H1 (cell line): ENCODE measurements at regions of chr1 and their contacts with region 1.

Region 1: DNA sequence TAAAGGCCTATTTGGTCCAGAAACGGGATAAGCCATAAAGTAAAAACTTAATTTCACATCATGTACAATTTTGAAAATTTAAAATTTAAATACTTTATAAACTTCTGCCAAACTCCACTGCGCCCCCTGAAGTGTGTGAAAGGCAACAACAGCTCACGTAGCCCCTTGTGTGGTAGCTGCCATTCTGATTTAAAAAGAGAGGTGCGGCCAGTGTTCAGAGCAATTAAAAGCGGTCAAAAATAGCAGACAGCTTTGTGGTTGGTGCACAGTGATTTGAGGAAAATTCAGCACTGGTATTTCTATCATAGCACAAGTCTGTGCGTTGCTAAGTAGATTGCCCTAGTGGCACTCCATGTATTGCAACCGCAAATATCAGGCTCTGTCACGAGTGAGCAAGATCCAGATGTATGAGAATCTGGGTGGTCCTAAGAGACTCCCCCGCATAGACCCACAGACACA is 122.5 kb downstream of the ATG4C start:
- DNase-seq: peak in 1 of 2 experiments; percentile 54
- H3K4me3 ChIP-seq: no peak overlapping the region
- H3K27ac ChIP-seq: no peak overlapping the region
- H3K4me1 ChIP-seq: no peaks in the 10 kb centered on the region; a peak in 1 of 7 replicates
- H3K27me3 ChIP-seq: no peaks in the 10 kb centered on the region
- CTCF ChIP-seq: peak; percentile 54 to 67 (median 65)
- EP300 ChIP-seq: no peak
- POLR2A ChIP-seq: no peak
- RAD21 ChIP-seq: peak; percentile 16 to 35; a peak in 2 of 4 replicates

Region 2: DNA sequence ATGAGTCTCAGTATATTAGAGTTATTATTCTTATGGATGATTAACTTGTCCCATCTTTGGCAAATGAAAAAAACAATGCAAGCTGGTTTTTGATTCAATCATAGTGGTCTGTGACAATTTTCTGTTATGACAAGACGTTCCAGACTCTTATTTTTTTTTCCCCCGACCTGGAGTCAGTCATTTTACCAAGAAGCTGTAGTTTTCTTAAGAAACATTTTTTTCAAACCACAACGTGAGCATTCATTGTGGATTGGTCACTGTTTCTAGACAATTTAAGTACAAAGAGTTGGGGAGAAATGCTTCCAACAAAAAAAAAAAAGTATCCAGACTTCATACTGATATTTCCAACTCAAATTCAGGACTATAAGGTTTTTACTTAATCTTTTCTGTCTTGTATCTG is 317.1 kb before region 1 on chr1:
- CTCF ChIA-PET with region 1: no interaction called
- POLR2A ChIA-PET with region 1: no interaction called
- DNase-seq: no peak
- H3K4me3 ChIP-seq: no peak overlapping the region
- H3K27ac ChIP-seq: no peak overlapping the region
- H3K4me1 ChIP-seq: peaks cover 0 to 4% (median 0%) of the 10 kb centered on the region in 4 experiments; a peak in 2 of 7 replicates
- H3K27me3 ChIP-seq: no peaks in the 10 kb centered on the region
- CTCF ChIP-seq: no peak
- EP300 ChIP-seq: no peak
- POLR2A ChIP-seq: no peak
- RAD21 ChIP-seq: no peak

Region 3: GRCh38 chr1:62875676-62876075 is 30.8 kb before region 1 on chr1:
- CTCF ChIA-PET with region 1: interaction called, 31 read pairs
- POLR2A ChIA-PET with region 1: no interaction called
- DNase-seq: no peak
- H3K4me3 ChIP-seq: no peak overlapping the region
- H3K27ac ChIP-seq: no peak overlapping the region
- H3K4me1 ChIP-seq: no peaks in the 10 kb centered on the region
- H3K27me3 ChIP-seq: no peaks in the 10 kb centered on the region
- CTCF ChIP-seq: no peak
- EP300 ChIP-seq: no peak
- POLR2A ChIP-seq: no peak
- RAD21 ChIP-seq: no peak

Region 4: GRCh38 chr1:62891956-62892561 is 14.4 kb before region 1 on chr1:
- CTCF ChIA-PET with region 1: interaction called, 77 read pairs
- POLR2A ChIA-PET with region 1: no interaction called
- DNase-seq: no peak
- H3K4me3 ChIP-seq: no peak overlapping the region
- H3K27ac ChIP-seq: no peak overlapping the region
- H3K4me1 ChIP-seq: no peaks in the 10 kb centered on the region; a peak in 1 of 7 replicates
- H3K27me3 ChIP-seq: no peaks in the 10 kb centered on the region
- CTCF ChIP-seq: no peak
- EP300 ChIP-seq: no peak
- POLR2A ChIP-seq: no peak
- RAD21 ChIP-seq: no peak

Region 5: DNA sequence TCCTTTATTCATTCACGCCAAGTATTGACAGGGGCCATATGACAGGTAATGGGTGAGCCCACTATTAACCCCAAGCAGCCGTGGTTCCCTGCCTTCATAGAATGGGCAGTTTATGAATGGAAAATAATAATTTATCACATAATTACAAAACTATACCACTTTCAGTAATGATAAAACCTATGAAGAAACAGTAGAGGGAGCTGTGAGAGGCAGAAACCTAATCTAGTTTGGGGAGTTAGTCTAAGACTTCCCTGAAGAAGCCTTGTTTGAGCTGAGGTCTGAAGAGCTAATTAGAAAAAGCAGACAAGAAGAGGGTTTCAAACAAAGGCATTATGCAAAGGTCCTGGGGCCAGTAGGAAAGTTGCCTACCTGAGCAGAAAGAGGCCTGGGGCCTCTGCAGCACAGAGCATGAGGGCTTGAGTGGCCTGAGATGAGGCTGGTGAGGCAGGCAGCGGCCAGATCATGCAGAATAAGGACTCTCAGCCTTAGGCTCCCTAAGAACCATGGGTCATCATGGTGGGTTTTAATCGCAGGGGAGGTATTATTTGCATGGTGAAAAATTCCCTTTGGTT is 20.3 kb after region 1 on chr1:
- CTCF ChIA-PET with region 1: interaction called, 47 read pairs
- POLR2A ChIA-PET with region 1: no interaction called
- DNase-seq: no peak
- H3K4me3 ChIP-seq: no peak overlapping the region
- H3K27ac ChIP-seq: no peak overlapping the region
- H3K4me1 ChIP-seq: no peaks in the 10 kb centered on the region
- H3K27me3 ChIP-seq: no peaks in the 10 kb centered on the region; a peak in 1 of 7 replicates
- CTCF ChIP-seq: peak in 1 of 3 experiments; percentile 6; a peak in 1 of 4 replicates
- EP300 ChIP-seq: no peak
- POLR2A ChIP-seq: no peak
- RAD21 ChIP-seq: peak; percentile 10 to 23; a peak in 2 of 4 replicates

Region 6: DNA sequence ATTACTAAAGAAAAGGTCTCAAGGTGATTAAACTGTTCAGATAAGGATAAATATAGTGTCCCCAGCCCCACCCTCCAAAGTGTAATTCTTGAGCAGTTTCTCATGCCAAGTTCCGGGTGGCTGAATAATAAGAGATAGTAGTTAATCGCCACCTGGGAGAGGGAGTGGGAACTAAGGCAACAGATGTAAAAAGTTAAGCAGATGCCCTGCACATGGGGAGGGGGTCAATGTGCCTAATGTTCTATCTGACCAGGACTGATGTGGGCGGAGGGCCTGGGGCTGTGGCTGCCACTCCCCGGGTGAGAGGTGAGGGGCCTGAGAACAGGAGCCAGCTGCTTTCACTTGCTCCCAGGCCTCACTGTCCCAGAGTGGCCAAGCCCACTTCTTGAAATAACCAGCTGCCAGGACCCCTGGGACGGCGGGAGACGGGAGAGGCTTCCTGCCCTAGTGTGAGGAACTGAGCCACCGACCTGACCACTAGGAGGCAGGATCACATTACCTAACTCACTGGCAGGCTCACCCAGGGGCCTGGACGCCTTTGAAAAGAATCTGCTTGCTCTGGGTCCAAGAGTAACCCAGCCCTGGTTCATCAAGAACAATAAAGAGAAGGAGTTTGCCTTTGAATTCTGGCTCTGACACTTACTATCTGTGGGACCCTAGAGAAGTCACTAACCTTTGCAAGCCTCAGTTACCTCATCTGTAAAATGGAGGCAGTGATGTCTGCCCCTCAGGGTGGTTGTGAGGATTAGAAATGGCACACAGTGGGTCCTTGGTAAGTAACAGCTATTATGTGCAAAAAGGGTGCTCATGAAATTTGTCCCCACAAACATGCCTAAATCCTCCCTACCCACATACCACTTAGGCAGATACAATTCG is 56.7 kb after region 1 on chr1:
- CTCF ChIA-PET with region 1: interaction called, 10 read pairs
- POLR2A ChIA-PET with region 1: no interaction called
- DNase-seq: peak; percentile 81 to 84
- H3K4me3 ChIP-seq: peak overlapping the region in 1 of 4 experiments; percentile 38; a peak in 1 of 8 replicates
- H3K27ac ChIP-seq: no peak overlapping the region
- H3K4me1 ChIP-seq: peaks cover 0 to 15% (median 4%) of the 10 kb centered on the region in 4 experiments; a peak in 6 of 7 replicates
- H3K27me3 ChIP-seq: peaks cover 0 to 2% (median 0%) of the 10 kb centered on the region in 4 experiments; a peak in 1 of 7 replicates
- CTCF ChIP-seq: peak; percentile 83 to 93 (median 88)
- EP300 ChIP-seq: no peak
- POLR2A ChIP-seq: no peak
- RAD21 ChIP-seq: peak; percentile 87 to 93